HepG2 (cell line): ENCODE measurements at regions of chr4 and their contacts with region 1.

Region 1: GRCh38 chr4:64539234-64539849 is 130.1 kb upstream of the TECRL start:
- DNase-seq: peak; percentile 55
- ATAC-seq: peak; percentile 88
- H3K4me3 ChIP-seq: no peak overlapping the region; a peak in 1 of 6 replicates
- H3K27ac ChIP-seq: no peak overlapping the region
- H3K4me1 ChIP-seq: peaks cover 7% of the 10 kb centered on the region
- H3K27me3 ChIP-seq: no peaks in the 10 kb centered on the region
- CTCF ChIP-seq: peak; percentile 77
- EP300 ChIP-seq: no peak
- POLR2A ChIP-seq: no peak
- RAD21 ChIP-seq: 0 out of 2 replicates have a peak, but pooled peaks have one; percentile 26

Region 2: GRCh38 chr4:63296773-63297172 is 1242.6 kb before region 1 on chr4:
- CTCF ChIA-PET with region 1: no interaction called
- POLR2A ChIA-PET with region 1: no interaction called
- in situ Hi-C with region 1: no loop called
- intact Hi-C with region 1: loop called (anchors 5 kb)
- DNase-seq: peak; percentile 4
- ATAC-seq: no peak
- H3K4me3 ChIP-seq: no peak overlapping the region
- H3K27ac ChIP-seq: no peak overlapping the region
- H3K4me1 ChIP-seq: no peaks in the 10 kb centered on the region
- H3K27me3 ChIP-seq: no peaks in the 10 kb centered on the region
- CTCF ChIP-seq: no peak
- EP300 ChIP-seq: no peak
- POLR2A ChIP-seq: no peak
- RAD21 ChIP-seq: no peak

Region 3: GRCh38 chr4:64158648-64159326 is 380.6 kb before region 1 on chr4:
- CTCF ChIA-PET with region 1: interaction called, 35 read pairs
- POLR2A ChIA-PET with region 1: no interaction called
- in situ Hi-C with region 1: loop called (anchors 5 kb)
- intact Hi-C with region 1: loop called (anchors 1 kb)
- DNase-seq: peak; percentile 59
- ATAC-seq: peak; percentile 79
- H3K4me3 ChIP-seq: peak overlapping the region in 1 of 3 experiments; percentile 27; a peak in 2 of 6 replicates
- H3K27ac ChIP-seq: no peak overlapping the region
- H3K4me1 ChIP-seq: no peaks in the 10 kb centered on the region
- H3K27me3 ChIP-seq: no peaks in the 10 kb centered on the region
- CTCF ChIP-seq: peak; percentile 80
- EP300 ChIP-seq: no peak
- POLR2A ChIP-seq: no peak
- RAD21 ChIP-seq: no peak

Region 4: GRCh38 chr4:64305565-64306254 is 233.6 kb before region 1 on chr4:
- CTCF ChIA-PET with region 1: no interaction called
- POLR2A ChIA-PET with region 1: no interaction called
- in situ Hi-C with region 1: loop called (anchors 25 kb)
- intact Hi-C with region 1: no loop called
- DNase-seq: no peak
- ATAC-seq: no peak
- H3K4me3 ChIP-seq: no peak overlapping the region
- H3K27ac ChIP-seq: no peak overlapping the region
- H3K4me1 ChIP-seq: no peaks in the 10 kb centered on the region
- H3K27me3 ChIP-seq: no peaks in the 10 kb centered on the region
- CTCF ChIP-seq: no peak
- EP300 ChIP-seq: no peak
- POLR2A ChIP-seq: no peak
- RAD21 ChIP-seq: no peak